ENCODE measurements at regions of chr19 and their contacts with region 1.

Region 1: GRCh38 chr19:41310033-41310758 is at the start of gene CCDC97:
- DNase-seq: peak; percentile 90
- ATAC-seq: peak; percentile 72
- H3K4me3 Mint-ChIP-seq: peak within 1 kb of the TSS; percentile 98
- H3K27ac Mint-ChIP-seq: peak within 1 kb of the TSS; percentile 98
- H3K4me1 Mint-ChIP-seq: peaks cover 61% of the 10 kb centered on the region
- H3K27me3 Mint-ChIP-seq: no peaks in the 10 kb centered on the region
- CTCF ChIP-seq: no peak
- total RNA-seq, gene CCDC97: 15.9 to 20.4 TPM

Region 2: DNA sequence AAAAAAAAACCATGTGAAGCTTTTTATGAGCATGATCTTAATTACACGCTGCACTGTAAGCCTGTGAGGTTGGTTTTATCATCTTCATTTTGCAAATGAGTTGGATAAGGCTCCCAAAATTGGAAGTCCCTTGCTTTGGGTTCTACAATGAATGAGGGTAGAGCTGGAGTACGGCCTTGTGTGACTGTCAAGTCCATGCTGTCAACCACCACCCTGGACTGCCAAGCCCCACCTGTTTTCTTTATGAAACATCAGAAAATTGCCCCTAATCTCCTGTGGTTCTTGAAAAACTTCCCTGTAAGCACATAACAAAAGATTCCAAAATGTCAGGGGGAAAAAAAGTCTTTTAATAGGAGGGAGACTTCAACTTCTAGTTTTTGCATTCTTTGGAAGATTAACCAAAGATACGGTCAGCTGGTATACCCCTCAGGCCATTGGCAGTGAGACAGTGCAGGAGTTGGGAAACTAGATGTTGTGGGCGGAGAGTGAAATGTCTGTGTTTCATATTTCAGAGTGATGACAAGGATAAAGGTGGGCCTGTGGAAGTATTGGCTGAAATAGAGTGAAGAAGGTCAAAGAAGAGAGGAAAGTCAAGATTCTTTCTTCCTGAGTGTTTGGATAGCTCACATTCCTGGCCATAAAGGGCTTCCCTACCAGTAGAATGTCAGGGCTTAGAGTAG is 278.4 kb before region 1 on chr19:
- CTCF ChIA-PET with region 1: no interaction called
- POLR2A ChIA-PET with region 1: no interaction called
- intact Hi-C with region 1: no loop called
- DNase-seq: no peak
- ATAC-seq: no peak
- H3K4me3 Mint-ChIP-seq: no peak overlapping the region
- H3K27ac Mint-ChIP-seq: no peak overlapping the region
- H3K4me1 Mint-ChIP-seq: peaks cover 4% of the 10 kb centered on the region
- H3K27me3 Mint-ChIP-seq: peaks cover 4% of the 10 kb centered on the region
- CTCF ChIP-seq: no peak

Region 3: GRCh38 chr19:41050434-41050833 is 259.8 kb before region 1 on chr19:
- CTCF ChIA-PET with region 1: no interaction called
- POLR2A ChIA-PET with region 1: no interaction called
- intact Hi-C with region 1: no loop called
- DNase-seq: no peak
- ATAC-seq: no peak
- H3K4me3 Mint-ChIP-seq: no peak overlapping the region
- H3K27ac Mint-ChIP-seq: no peak overlapping the region
- H3K4me1 Mint-ChIP-seq: no peaks in the 10 kb centered on the region
- H3K27me3 Mint-ChIP-seq: peaks cover 8% of the 10 kb centered on the region
- CTCF ChIP-seq: no peak

Region 4: DNA sequence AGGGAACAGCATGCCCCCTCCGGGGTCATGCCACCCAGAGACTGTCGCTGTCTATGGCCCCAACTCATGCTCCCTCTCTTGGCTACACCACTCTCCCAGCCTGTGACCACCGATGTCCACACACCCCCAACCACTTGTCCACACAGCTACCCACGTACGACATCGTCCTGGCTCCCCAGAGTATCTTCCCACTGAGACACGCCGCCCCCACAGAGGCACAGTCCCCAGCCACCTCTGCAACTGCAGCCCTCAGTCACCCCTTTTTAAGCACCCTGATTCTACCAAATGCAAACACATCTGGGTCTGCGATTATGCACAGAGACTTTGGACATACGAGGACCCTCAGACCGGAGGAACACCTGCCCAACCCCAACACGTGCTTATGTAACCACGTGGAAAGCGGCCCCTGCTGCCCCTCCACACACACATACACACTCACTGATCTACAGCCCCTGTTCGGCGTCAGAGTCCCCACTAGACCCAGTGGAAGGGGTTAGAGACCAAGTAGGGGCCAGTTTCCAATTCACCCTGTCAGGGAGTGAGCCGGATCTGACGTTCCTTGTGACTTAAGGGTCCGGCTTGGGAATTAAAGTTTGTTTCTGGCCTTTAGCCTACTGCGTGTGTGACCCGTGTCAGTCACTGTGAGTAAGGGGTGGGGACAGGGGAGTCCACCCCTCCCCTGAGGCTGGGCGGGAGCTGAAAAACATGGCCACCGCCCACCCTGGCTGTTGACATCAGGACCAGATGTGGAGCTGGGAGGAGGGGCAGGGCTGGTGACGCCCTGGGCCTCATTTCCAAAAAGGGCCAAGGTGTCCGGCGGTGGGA is 103.1 kb before region 1 on chr19:
- CTCF ChIA-PET with region 1: interaction called, 28 read pairs
- POLR2A ChIA-PET with region 1: interaction called, 12 read pairs
- intact Hi-C with region 1: loop called (anchors 5 kb)
- DNase-seq: no peak
- ATAC-seq: no peak
- H3K4me3 Mint-ChIP-seq: no peak overlapping the region
- H3K27ac Mint-ChIP-seq: no peak overlapping the region
- H3K4me1 Mint-ChIP-seq: peaks cover 7% of the 10 kb centered on the region
- H3K27me3 Mint-ChIP-seq: no peaks in the 10 kb centered on the region
- CTCF ChIP-seq: no peak

Region 5: GRCh38 chr19:41249707-41250423 is 60.3 kb before region 1 on chr19:
- CTCF ChIA-PET with region 1: no interaction called
- POLR2A ChIA-PET with region 1: no interaction called
- intact Hi-C with region 1: no loop called
- DNase-seq: no peak
- ATAC-seq: no peak
- H3K4me3 Mint-ChIP-seq: no peak overlapping the region
- H3K27ac Mint-ChIP-seq: no peak overlapping the region
- H3K4me1 Mint-ChIP-seq: no peaks in the 10 kb centered on the region
- H3K27me3 Mint-ChIP-seq: peaks cover 7% of the 10 kb centered on the region
- CTCF ChIP-seq: no peak

Region 6: GRCh38 chr19:41263850-41264580 is 46.2 kb before region 1 on chr19 and contains the start of gene HNRNPUL1:
- CTCF ChIA-PET with region 1: interaction called, 53 read pairs
- POLR2A ChIA-PET with region 1: interaction called, 179 read pairs
- intact Hi-C with region 1: loop called (anchors 2 kb)
- DNase-seq: peak; percentile 98
- ATAC-seq: peak; percentile 79
- H3K4me3 Mint-ChIP-seq: peak within 1 kb of the TSS; percentile 95
- H3K27ac Mint-ChIP-seq: peak within 1 kb of the TSS; percentile 100
- H3K4me1 Mint-ChIP-seq: peaks cover 31% of the 10 kb centered on the region
- H3K27me3 Mint-ChIP-seq: no peaks in the 10 kb centered on the region
- CTCF ChIP-seq: no peak
- total RNA-seq, gene HNRNPUL1: 257 to 259 TPM

Region 7: DNA sequence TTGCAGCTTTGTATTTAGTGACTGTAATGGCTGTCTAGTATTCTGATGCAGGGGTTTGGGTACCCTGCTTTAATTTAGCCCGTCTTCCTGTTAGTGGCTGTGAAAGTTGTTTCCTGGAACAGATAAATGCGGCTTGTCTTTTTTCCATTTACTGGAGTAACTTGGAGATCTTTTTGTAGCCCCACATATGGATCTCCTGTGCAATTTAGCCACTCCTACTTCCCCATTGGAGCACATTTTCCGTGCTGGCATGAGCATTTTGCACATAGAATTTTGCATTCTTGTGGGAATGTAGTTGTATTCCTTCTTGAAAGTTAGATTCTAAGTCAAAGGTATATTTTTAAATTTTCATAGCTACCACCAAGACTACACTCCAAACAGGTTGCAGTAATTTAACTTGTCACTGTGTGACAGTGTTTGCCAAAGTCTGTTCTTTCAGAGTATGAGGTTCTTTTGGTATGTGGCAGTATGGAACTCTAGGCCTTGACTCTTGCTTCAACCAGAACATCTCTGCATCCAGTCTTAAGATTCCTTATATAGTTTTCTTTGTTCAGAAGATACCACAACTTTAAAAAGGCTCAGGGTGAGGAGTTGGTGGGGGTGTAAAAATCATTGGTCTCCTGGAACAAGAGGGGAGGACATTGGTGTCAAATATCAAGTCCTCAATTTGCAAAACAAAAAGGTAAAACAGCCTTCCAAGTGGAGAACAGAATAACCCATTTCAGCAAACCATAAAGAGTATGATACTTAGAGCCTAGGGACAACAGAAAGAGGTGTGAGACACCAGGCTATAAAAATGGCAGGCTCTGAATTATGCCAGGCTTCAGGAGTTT is 21.3 kb before region 1 on chr19:
- CTCF ChIA-PET with region 1: interaction called, 25 read pairs
- POLR2A ChIA-PET with region 1: interaction called, 8 read pairs
- intact Hi-C with region 1: no loop called
- DNase-seq: no peak
- ATAC-seq: no peak
- H3K4me3 Mint-ChIP-seq: no peak overlapping the region
- H3K27ac Mint-ChIP-seq: peak overlapping the region; percentile 38
- H3K4me1 Mint-ChIP-seq: peaks cover 3% of the 10 kb centered on the region
- H3K27me3 Mint-ChIP-seq: no peaks in the 10 kb centered on the region
- CTCF ChIP-seq: no peak

Region 8: GRCh38 chr19:41298348-41298964 is 11.7 kb before region 1 on chr19:
- CTCF ChIA-PET with region 1: interaction called, 25 read pairs
- POLR2A ChIA-PET with region 1: interaction called, 23 read pairs
- intact Hi-C with region 1: no loop called
- DNase-seq: peak; percentile 33
- ATAC-seq: no peak
- H3K4me3 Mint-ChIP-seq: no peak overlapping the region
- H3K27ac Mint-ChIP-seq: peak overlapping the region; percentile 84
- H3K4me1 Mint-ChIP-seq: peaks cover 75% of the 10 kb centered on the region
- H3K27me3 Mint-ChIP-seq: no peaks in the 10 kb centered on the region
- CTCF ChIP-seq: no peak

Region 9: DNA sequence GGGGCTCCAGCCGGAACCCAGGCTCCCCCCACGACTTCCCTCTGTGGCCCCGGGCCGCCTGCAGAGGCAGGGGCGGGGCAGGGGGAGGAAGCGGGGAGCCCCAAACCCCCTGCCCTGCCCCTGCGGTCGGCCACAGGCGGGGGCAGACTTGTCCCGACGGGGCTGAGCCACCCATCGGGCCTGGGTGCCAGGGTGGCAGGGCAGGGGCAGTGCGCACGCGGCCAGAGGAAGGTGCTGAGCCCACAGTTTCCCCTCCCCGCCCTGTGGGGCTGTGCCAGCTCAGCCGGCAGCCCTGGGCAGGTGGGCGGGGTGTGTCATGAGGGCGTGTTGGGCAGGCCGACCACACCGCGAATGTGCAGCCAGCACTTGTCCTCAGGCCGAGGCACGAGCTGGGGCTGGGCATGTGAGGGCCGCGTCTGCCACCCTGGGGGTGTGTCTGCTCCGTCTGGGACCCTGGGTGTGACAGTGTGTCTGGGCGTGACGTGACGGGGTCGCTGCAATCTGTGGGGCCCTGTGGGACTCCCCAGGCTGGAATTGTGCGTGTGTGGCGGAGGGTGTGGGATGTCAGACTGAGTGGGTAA is 17.5 kb after region 1 on chr19:
- CTCF ChIA-PET with region 1: interaction called, 6 read pairs
- POLR2A ChIA-PET with region 1: interaction called, 29 read pairs
- intact Hi-C with region 1: no loop called
- DNase-seq: peak; percentile 94
- ATAC-seq: peak; percentile 73
- H3K4me3 Mint-ChIP-seq: peak overlapping the region; percentile 65
- H3K27ac Mint-ChIP-seq: peak overlapping the region; percentile 96
- H3K4me1 Mint-ChIP-seq: peaks cover 68% of the 10 kb centered on the region
- H3K27me3 Mint-ChIP-seq: no peaks in the 10 kb centered on the region
- CTCF ChIP-seq: no peak

Region 10: DNA sequence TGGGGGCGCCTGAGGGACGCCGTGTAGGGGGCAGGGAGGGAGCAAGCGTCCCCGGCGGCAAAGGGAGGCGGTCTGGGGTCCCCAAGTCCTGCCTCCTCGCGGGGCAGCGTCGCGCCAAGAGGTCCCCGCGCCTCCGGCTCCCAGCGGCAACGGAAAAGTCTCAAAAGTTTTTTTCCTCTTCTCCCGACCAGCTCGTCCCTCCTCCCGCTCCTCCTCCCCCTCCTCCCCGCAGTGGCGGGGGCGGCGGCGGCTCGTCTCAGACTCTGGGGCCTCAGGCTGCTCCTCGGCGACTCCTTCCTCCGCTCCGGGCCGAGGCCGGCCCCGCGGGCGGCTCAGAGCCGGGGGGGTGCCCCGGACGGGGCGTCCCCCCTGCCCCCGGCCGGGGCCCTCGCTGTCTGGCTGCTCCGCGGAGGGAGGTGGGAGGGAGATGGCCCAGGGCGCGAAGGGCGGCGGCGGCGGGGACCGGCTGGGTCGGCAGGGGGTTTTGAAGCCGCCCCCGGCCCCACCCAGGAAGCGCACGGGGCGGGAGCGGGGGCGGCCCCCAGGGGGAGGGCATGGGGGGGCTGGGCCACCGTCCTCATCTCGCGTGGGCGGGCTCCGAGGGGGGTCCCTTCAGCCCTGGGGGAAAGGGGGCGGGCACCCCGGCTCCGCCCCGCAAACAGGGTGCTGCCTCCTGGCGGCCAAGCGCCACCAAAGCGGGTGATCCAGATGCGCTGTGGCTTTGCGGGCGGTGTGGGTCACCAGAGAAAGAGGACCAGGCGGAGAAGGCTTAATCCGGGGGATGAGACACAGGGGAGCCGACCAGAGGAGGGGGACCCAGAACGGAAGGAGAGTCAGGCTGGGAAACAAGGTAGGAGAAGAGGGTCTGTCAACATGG is 43.5 kb after region 1 on chr19 and contains the start of gene TGFB1:
- CTCF ChIA-PET with region 1: interaction called, 7 read pairs
- POLR2A ChIA-PET with region 1: interaction called, 39 read pairs
- intact Hi-C with region 1: loop called (anchors 5 kb)
- DNase-seq: peak; percentile 94
- ATAC-seq: peak; percentile 59
- H3K4me3 Mint-ChIP-seq: peak within 1 kb of the TSS; percentile 100
- H3K27ac Mint-ChIP-seq: peak within 1 kb of the TSS; percentile 99
- H3K4me1 Mint-ChIP-seq: peaks cover 60% of the 10 kb centered on the region
- H3K27me3 Mint-ChIP-seq: no peaks in the 10 kb centered on the region
- CTCF ChIP-seq: peak; percentile 83
- total RNA-seq, gene TGFB1: 112 to 123 TPM

Region 11: GRCh38 chr19:41521931-41522555 is 211.8 kb after region 1 on chr19:
- CTCF ChIA-PET with region 1: no interaction called
- POLR2A ChIA-PET with region 1: no interaction called
- intact Hi-C with region 1: no loop called
- DNase-seq: peak; percentile 59
- ATAC-seq: peak; percentile 63
- H3K4me3 Mint-ChIP-seq: peak overlapping the region; percentile 72
- H3K27ac Mint-ChIP-seq: peak overlapping the region; percentile 81
- H3K4me1 Mint-ChIP-seq: peaks cover 21% of the 10 kb centered on the region
- H3K27me3 Mint-ChIP-seq: peaks cover 38% of the 10 kb centered on the region
- CTCF ChIP-seq: peak; percentile 27